ENCODE measurements at regions of chr2 and their contacts with region 1.

Region 1: DNA sequence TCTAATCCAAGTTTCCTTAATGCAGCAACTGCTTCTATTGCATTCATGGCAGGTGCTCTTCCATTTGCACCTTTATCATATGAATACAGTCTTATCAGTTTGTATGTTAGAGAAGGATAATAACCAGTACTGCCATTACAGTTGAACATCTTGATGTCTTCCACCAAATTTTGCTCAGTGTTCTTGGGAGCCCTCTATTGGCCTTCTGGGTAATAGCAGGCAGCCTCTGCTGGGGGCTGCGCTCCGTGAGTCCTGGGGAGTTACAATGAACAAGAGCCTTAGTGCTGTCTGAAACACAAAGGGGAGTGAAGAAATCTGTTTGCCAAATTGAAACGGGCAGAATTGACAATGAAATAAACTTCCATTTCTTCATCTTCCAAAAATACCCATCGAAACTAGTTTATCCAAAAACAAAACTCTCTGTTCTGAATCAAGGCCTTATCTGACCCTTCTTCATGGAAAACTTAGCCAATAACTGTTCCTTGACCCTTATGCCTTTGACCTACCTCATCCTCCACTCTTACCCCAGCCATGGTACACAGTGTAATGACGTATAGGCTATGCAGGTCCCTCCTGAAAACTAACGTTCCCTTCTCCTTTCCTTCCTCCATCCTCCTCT is 79.9 kb downstream of the ALK start:
- DNase-seq: peak; percentile 47
- CTCF ChIP-seq: peak; percentile 89

Region 2: DNA sequence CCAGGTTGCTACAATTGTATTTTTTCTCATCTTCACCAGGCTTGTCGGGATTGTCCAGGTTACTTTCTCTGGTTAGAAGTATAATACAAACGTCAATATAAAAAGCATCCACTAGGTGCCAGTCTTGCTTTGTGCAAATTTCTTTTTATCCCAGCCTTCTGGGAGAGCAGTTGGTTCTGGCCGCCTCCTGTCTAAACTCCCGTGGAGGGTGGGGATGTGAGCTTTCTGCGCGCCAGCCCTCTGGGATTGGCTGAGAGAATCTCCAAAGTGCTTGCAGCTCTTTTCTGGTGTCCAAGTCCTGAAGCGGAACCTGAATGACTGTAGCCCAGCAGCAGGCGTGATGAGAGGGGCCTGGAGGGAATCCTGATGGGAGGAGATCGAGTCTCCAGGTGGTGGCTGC is 882.8 kb before region 1 on chr2:
- in situ Hi-C with region 1: loop called (anchors 25 kb)
- DNase-seq: peak; percentile 73
- CTCF ChIP-seq: peak; percentile 58

Region 3: GRCh38 chr2:29309090-29310029 is 532.1 kb before region 1 on chr2:
- in situ Hi-C with region 1: loop called (anchors 25 kb)
- DNase-seq: peak; percentile 63
- CTCF ChIP-seq: peak; percentile 87

Measured in GM13977 (cell line).